Esophagus muscularis mucosa (tissue), 4 donors: ENCODE measurements at regions of chr12 and their contacts with region 1.

Region 1: DNA sequence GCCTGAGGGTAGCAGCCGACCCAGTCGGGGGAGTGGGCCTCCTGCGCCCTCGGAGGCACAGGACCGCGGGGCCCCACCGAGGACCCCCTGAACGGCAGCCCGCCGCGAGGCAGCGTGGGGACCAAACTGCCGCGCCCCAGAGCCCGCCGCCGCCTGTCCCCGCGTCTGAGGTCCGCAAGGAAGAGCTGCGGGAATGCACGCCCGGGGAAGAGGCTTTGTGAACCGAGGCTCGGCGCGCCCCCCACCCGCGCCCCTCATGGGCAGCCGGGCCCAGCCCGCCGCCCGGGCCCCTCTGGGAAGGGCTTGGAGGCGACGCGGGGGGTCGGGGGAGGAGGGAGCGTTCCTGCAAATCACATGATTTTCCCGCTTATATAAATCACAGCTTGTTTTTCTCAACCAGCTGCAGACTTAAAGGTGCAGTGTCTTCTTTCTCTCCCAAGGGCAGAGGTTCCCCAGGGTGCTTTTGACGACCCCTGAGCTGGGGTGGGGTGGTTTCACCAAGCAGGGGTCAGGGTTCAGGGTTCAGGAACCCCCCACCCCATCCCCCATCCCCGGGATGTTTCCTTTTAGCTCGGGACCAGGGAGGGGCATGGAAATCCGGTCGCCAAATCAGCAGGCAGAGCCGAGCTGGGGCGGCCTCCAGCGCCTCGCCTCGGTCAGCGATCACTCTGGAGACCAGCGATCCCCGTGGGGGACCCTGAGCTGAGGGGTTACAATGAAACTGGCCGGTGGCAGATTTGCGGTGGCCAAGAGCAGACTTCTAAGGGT is 44.7 kb upstream of the ATP23 start:
- DNase-seq: no peak
- H3K4me3 ChIP-seq: peak overlapping the region; percentile 60 to 83 (median 67)
- H3K27ac ChIP-seq: peak overlapping the region; percentile 93 to 99 (median 96)
- H3K4me1 ChIP-seq: peaks cover 73 to 84% (median 77%) of the 10 kb centered on the region in 4 donors
- H3K27me3 ChIP-seq: no peaks in the 10 kb centered on the region
- CTCF ChIP-seq: peak; percentile 55 to 69 (median 68)
- EP300 ChIP-seq: peak; percentile 73
- POLR2A ChIP-seq: peak; percentile 85

Region 2: DNA sequence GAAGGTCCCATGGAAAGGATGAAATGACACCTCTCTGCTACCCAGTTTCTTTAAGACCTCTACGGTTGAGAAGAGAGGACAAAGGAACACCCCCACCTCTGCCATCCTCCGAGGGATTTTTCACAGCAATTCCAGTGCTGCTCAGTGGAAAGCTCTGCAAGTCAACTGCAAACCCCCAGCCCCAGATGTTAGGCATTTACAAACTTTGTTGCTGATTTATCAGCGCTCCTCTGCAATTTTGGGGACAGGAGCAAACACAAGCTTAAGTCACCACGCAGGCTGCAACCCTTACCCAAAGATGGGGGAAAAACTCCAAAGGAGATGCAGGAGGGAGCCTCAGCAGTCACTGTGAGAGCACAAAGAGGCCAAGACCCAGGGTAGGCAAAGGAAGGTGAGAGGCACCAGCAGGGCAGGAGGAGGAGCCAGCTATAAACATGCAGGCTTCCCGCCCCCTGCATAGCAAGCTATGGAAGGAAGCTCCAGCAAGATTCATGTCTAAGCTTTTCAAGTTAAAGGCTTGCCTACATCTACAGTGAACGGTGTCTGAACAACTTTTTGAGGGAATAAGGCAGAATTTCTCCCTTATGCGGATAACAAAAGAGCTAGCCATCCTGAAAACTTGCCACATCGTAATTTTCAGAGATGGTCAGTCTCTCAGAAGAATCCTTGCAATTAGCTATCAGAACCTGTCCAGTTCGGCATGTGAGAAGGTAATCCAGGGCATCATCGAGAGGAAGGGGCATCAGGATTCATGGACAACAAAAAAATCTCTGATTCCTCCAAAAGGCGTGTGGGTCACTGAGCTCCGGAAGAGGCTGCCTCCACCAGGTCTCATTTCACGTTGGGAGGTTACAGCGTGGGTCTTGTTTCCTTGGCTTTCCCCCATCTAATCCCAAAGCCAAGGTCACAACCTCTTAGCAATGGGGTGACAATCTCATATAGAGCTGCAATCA is 54.0 kb before region 1 on chr12:
- intact Hi-C with region 1: loop called (anchors 2 kb)
- DNase-seq: no peak
- H3K4me3 ChIP-seq: peak overlapping the region; percentile 84 to 100 (median 98)
- H3K27ac ChIP-seq: peak overlapping the region; percentile 99 to 100 (median 100)
- H3K4me1 ChIP-seq: peaks cover 72 to 77% (median 75%) of the 10 kb centered on the region in 4 donors
- H3K27me3 ChIP-seq: no peaks in the 10 kb centered on the region
- CTCF ChIP-seq: no peak
- EP300 ChIP-seq: no peak
- POLR2A ChIP-seq: no peak